CD8-positive, alpha-beta memory T cell (primary cell): ENCODE measurements at regions of chr11 and their contacts with region 1.

Region 1: GRCh38 chr11:65134386-65135253 is at the start of gene SYVN1:
- DNase-seq: peak; percentile 86 to 95 (median 91)
- H3K4me3 ChIP-seq: peak within 1 kb of the TSS; percentile 99
- H3K4me3 Mint-ChIP-seq: peak within 1 kb of the TSS; percentile 94 to 100 (median 98)
- H3K27ac ChIP-seq: peak within 1 kb of the TSS; percentile 100
- H3K27ac Mint-ChIP-seq: peak within 1 kb of the TSS; percentile 98 to 100 (median 100)
- H3K4me1 ChIP-seq: peaks cover 31% of the 10 kb centered on the region
- H3K4me1 Mint-ChIP-seq: peaks cover 35 to 52% (median 36%) of the 10 kb centered on the region in 3 donors
- H3K27me3 ChIP-seq: no peaks in the 10 kb centered on the region
- H3K27me3 Mint-ChIP-seq: peaks cover 0 to 4% of the 10 kb centered on the region in 2 donors
- total RNA-seq, gene SYVN1: 35.1 to 39.7 TPM

Region 2: DNA sequence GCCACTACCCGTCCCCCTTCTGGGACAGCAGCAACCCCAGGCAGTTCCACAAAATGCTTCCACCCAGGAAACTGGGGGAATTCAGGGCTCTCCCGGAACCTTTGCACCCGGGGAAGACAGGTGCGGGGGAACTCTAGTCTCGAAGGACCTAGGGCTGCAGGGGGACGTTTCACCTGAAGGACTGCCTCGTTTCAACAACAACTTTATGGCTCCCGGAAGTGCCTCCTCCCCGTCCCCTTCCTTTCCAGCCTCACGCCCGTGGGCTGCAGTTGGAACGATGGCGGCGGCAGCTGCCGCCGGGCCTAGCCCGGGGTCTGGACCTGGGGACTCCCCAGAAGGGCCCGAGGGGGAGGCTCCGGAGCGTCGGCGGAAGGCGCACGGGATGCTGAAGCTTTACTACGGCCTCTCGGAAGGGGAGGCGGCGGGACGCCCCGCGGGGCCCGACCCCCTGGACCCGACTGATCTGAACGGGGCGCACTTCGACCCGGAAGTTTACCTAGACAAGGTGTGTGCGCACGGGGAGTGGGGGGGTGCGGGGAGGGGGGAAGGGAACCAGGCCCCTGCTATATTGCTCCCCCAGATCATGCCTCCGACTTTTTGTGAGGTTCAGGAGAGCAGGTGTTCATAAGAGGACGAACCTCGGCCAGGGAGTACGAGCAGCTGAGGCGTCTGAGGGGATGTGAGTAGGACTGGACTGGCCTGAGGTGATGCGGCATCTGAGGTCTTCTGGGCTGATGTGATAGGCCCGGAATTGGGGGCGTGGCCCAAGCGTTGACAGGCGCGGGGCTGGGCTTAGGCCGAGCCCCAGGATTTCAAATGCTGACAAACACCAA is 38.4 kb before region 1 on chr11 and contains the start of gene VPS51:
- CTCF ChIA-PET with region 1: interaction called, 4 read pairs
- POLR2A ChIA-PET with region 1: interaction called, 11 read pairs
- DNase-seq: peak; percentile 70 to 90 (median 85)
- H3K4me3 ChIP-seq: peak within 1 kb of the TSS; percentile 93
- H3K4me3 Mint-ChIP-seq: peak within 1 kb of the TSS; percentile 92 to 97 (median 94)
- H3K27ac ChIP-seq: peak within 1 kb of the TSS; percentile 82
- H3K27ac Mint-ChIP-seq: peak within 1 kb of the TSS; percentile 76 to 98 (median 94)
- H3K4me1 ChIP-seq: peaks cover 22% of the 10 kb centered on the region
- H3K4me1 Mint-ChIP-seq: peaks cover 13 to 28% (median 19%) of the 10 kb centered on the region in 3 donors
- H3K27me3 ChIP-seq: no peaks in the 10 kb centered on the region
- H3K27me3 Mint-ChIP-seq: no peaks in the 10 kb centered on the region
- total RNA-seq, gene VPS51: 120 to 131 TPM

Region 3: GRCh38 chr11:65117216-65118096 is 17.2 kb before region 1 on chr11 and contains the start of gene ZNHIT2:
- CTCF ChIA-PET with region 1: interaction called, 10 read pairs
- POLR2A ChIA-PET with region 1: interaction called, 60 read pairs
- DNase-seq: peak; percentile 99 to 100 (median 100)
- H3K4me3 ChIP-seq: peak within 1 kb of the TSS; percentile 85
- H3K4me3 Mint-ChIP-seq: peak within 1 kb of the TSS; percentile 88 to 94 (median 90)
- H3K27ac ChIP-seq: peak within 1 kb of the TSS; percentile 91
- H3K27ac Mint-ChIP-seq: peak within 1 kb of the TSS; percentile 92 to 99 (median 97)
- H3K4me1 ChIP-seq: peaks cover 45% of the 10 kb centered on the region
- H3K4me1 Mint-ChIP-seq: peaks cover 39 to 77% (median 47%) of the 10 kb centered on the region in 3 donors
- H3K27me3 ChIP-seq: no peaks in the 10 kb centered on the region
- H3K27me3 Mint-ChIP-seq: peaks cover 0 to 3% of the 10 kb centered on the region in 2 donors
- total RNA-seq, gene ZNHIT2: 15.2 to 20.1 TPM